MCF 10A (cell line): ENCODE measurements at regions of chr5 and their contacts with region 1.

Region 1: GRCh38 chr5:72687288-72687687 is 129.2 kb upstream of the TNPO1 start:
- DNase-seq: no peak
- H3K4me3 Mint-ChIP-seq: no peak overlapping the region
- H3K27ac Mint-ChIP-seq: no peak overlapping the region
- H3K4me1 Mint-ChIP-seq: no peaks in the 10 kb centered on the region
- H3K27me3 Mint-ChIP-seq: no peaks in the 10 kb centered on the region
- CTCF ChIP-seq: no peak

Region 2: GRCh38 chr5:72624641-72625236 is 62.5 kb before region 1 on chr5:
- CTCF ChIA-PET with region 1: no interaction called
- POLR2A ChIA-PET with region 1: no interaction called
- intact Hi-C with region 1: loop called (anchors 10 kb)
- DNase-seq: peak; percentile 50
- H3K4me3 Mint-ChIP-seq: no peak overlapping the region
- H3K27ac Mint-ChIP-seq: peak overlapping the region; percentile 57
- H3K4me1 Mint-ChIP-seq: peaks cover 12% of the 10 kb centered on the region
- H3K27me3 Mint-ChIP-seq: no peaks in the 10 kb centered on the region
- CTCF ChIP-seq: no peak

Region 3: GRCh38 chr5:72908664-72909063 is 221.4 kb after region 1 on chr5:
- CTCF ChIA-PET with region 1: no interaction called
- POLR2A ChIA-PET with region 1: no interaction called
- intact Hi-C with region 1: no loop called
- DNase-seq: no peak
- H3K4me3 Mint-ChIP-seq: no peak overlapping the region
- H3K27ac Mint-ChIP-seq: no peak overlapping the region
- H3K4me1 Mint-ChIP-seq: no peaks in the 10 kb centered on the region
- H3K27me3 Mint-ChIP-seq: no peaks in the 10 kb centered on the region
- CTCF ChIP-seq: no peak